ENCODE measurements at regions of chrX and their contacts with region 1.

Region 1: GRCh38 chrX:53321230-53321942 is 40.0 kb upstream of the IQSEC2 start:
- DNase-seq: peak in 2 of 7 donors; percentile 14 to 20
- H3K4me3 ChIP-seq: peak overlapping the region in 2 of 4 donors; percentile 41 to 60
- H3K27ac ChIP-seq: no peak overlapping the region
- H3K4me1 ChIP-seq: peaks cover 4 to 6% of the 10 kb centered on the region in 2 donors
- H3K27me3 ChIP-seq: peaks cover 48% of the 10 kb centered on the region
- CTCF ChIP-seq: no peak
- POLR2A ChIP-seq: peak in 1 of 2 donors; percentile 54

Region 2: GRCh38 chrX:53239474-53239873 is 81.9 kb before region 1 on chrX:
- intact Hi-C with region 1: no loop called
- DNase-seq: peak in 1 of 7 donors; percentile 31
- H3K4me3 ChIP-seq: no peak overlapping the region
- H3K27ac ChIP-seq: no peak overlapping the region
- H3K4me1 ChIP-seq: no peaks in the 10 kb centered on the region
- H3K27me3 ChIP-seq: no peaks in the 10 kb centered on the region
- CTCF ChIP-seq: no peak
- POLR2A ChIP-seq: no peak

Region 3: DNA sequence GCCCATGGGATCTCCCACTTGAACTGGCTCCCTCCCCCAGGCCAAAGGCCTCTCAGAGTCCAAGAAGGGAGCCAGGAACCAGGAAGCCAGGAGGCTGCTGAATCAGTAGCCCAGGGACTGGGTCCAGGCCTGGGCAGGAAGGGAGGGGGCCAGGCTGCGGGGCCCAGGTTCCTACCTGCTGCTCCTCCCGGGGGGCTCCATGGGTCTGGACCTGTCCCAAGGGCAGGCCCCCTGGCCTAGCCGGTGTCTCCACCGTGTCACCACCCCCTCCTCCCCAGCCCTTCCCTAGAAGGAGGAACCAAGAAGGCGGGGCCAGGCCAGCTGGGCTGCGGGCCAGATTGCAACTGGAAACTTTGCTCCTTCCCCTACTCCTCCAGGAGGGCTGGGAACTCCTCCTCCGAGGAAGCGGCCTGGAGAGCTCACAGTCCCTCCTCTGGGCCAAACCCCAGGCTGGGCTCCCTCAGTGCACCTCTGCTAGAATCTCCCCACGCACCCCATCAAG is 40.0 kb before region 1 on chrX and contains the start of gene IQSEC2:
- intact Hi-C with region 1: no loop called
- DNase-seq: peak; percentile 83 to 90 (median 86)
- H3K4me3 ChIP-seq: peak within 1 kb of the TSS in 1 of 4 donors; percentile 50
- H3K27ac ChIP-seq: peak within 1 kb of the TSS; percentile 54 to 89 (median 76)
- H3K4me1 ChIP-seq: peaks cover 7 to 35% of the 10 kb centered on the region in 2 donors
- H3K27me3 ChIP-seq: peaks cover 13% of the 10 kb centered on the region
- CTCF ChIP-seq: no peak
- POLR2A ChIP-seq: peak in 1 of 2 donors; percentile 41
- total RNA-seq, gene IQSEC2: 2.4 to 56.1 (median 37.5) TPM

Region 4: DNA sequence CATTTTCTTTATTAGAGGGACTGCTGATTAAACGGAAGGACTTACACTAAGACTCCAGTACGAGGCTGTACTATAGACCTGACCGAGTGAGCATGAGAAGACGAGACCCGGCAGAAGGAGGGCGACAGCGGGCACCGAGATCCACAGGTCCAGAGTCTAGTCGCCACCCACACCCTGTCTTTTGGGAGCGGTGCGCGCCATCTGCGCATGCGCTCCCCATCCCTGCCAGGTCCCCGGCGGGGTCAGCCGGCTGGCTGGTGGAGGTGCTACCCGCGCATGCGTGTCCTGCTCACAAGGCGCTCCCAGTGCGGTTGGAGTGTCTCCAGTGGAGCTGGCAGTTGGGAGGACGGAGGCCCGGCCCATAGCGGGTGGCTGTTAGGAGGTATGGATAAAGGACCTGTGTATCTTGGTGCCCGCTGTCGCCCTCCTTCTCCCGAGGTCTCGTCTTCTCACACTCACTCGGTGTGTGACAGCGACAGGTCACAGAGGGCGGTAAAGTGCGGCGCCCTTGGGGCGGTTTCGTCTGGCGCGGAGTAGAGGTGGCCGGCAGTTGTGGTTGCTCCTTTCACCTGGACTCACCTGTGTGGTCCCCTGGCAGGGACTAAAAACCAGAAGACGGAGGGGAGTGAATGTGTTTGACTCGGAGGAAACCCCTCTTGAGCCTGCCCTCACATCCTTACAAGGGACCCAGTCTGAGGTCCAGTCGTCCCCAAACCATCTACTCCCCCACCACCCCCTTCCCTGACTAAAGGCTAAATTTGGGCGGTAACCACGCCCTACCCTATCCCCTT is 120.3 kb after region 1 on chrX:
- intact Hi-C with region 1: loop called in 1 of 2 experiments (anchors 10 kb)
- DNase-seq: peak; percentile 83 to 91 (median 88)
- H3K4me3 ChIP-seq: peak overlapping the region in 2 of 4 donors; percentile 27 to 43
- H3K27ac ChIP-seq: peak overlapping the region; percentile 72 to 91 (median 80)
- H3K4me1 ChIP-seq: peaks cover 5 to 17% of the 10 kb centered on the region in 2 donors
- H3K27me3 ChIP-seq: no peaks in the 10 kb centered on the region
- CTCF ChIP-seq: no peak
- POLR2A ChIP-seq: peak; percentile 32 to 66

Measured in adrenal gland (tissue), 19 donors.